ENCODE measurements at regions of chr6 and their contacts with region 1.

Region 1: GRCh38 chr6:134422426-134423231 is 104.7 kb upstream of the SGK1 start:
- DNase-seq: peak; percentile 98
- H3K4me3 ChIP-seq: no peak overlapping the region
- H3K27ac ChIP-seq: peak overlapping the region; percentile 95
- H3K4me1 ChIP-seq: peaks cover 48% of the 10 kb centered on the region
- H3K27me3 ChIP-seq: no peaks in the 10 kb centered on the region
- CTCF ChIP-seq: no peak

Region 2: DNA sequence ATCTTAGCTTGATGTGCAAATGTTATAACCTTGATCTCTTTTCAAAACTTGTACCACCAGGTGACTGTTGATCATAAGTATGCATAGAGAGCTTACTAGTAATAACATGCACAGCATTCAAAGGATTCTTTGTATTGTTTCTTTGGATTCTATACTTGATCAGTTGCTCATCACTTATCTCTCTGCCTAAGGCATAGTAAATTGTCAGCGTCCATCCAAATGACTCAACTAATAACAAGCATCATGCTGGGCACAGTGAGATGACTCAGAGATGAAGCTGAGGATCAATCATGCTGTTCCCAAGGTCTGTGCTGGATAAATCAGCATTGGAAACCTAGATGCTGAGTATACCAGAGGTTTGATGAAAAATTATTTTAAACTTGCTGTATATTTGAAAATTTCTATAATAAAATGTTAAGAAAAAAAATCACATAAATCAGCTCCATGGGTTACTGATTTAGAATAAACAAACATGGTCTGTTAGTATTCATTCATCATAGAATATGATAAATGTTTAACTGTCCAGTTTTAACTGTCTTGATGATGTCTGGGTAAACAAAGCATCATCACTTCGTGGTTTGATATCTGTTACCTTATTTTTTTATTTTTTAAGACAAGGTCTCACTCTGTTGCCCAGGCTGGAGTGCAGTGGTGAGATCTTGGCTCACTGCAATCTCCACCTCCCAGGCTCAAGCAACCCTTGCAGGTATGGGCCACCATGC is 59.1 kb before region 1 on chr6:
- CTCF ChIA-PET with region 1: no interaction called
- dilution Hi-C with region 1: no loop called
- in situ Hi-C with region 1: no loop called
- intact Hi-C with region 1: loop called (anchors 2 kb)
- DNase-seq: peak; percentile 98
- H3K4me3 ChIP-seq: no peak overlapping the region
- H3K27ac ChIP-seq: peak overlapping the region; percentile 88
- H3K4me1 ChIP-seq: peaks cover 24% of the 10 kb centered on the region
- H3K27me3 ChIP-seq: no peaks in the 10 kb centered on the region
- CTCF ChIP-seq: no peak

Region 3: DNA sequence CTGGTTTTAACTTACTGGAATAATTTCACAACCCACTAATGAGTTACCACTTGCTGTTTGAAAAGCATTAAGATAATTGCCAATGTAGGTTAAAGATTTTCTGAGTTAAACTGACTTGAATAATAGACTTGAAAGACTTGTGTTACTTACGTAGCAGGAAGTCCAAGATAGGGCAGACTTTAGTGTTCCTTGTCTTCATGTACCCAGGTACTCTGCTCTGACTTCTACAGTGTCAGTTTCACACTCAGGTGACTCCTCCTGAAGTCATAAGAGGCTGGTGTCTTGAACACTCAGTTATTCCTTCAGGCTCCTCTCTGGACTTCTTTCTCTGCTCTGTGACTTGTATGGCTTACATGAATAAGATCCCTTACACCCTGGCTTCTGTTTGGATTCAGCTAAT is 28.4 kb before region 1 on chr6:
- CTCF ChIA-PET with region 1: no interaction called
- dilution Hi-C with region 1: no loop called
- in situ Hi-C with region 1: no loop called
- intact Hi-C with region 1: loop called (anchors 2 kb)
- DNase-seq: no peak
- H3K4me3 ChIP-seq: no peak overlapping the region
- H3K27ac ChIP-seq: no peak overlapping the region
- H3K4me1 ChIP-seq: peaks cover 11% of the 10 kb centered on the region
- H3K27me3 ChIP-seq: no peaks in the 10 kb centered on the region
- CTCF ChIP-seq: no peak

Region 4: DNA sequence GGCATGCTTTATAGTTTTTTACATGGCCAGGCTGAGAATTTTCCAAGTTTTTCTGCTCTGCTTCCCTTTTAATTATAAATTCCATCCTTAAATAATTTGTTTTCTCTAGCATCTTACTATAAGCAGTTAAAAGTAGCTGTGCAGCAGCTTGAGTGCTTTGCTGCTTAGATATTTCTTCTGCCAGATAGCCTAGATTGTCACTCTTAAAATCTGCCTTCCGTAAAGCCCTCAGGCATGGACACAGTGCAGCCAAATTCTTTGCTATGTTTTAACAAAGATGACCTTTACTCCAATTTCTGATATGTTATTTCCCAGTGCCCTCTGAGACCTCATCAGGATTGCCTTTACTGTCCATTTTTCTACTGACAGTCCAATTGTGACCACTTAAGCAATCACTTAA is 12.1 kb before region 1 on chr6:
- CTCF ChIA-PET with region 1: no interaction called
- dilution Hi-C with region 1: no loop called
- in situ Hi-C with region 1: no loop called
- intact Hi-C with region 1: no loop called
- DNase-seq: no peak
- H3K4me3 ChIP-seq: no peak overlapping the region
- H3K27ac ChIP-seq: no peak overlapping the region
- H3K4me1 ChIP-seq: no peaks in the 10 kb centered on the region
- H3K27me3 ChIP-seq: no peaks in the 10 kb centered on the region
- CTCF ChIP-seq: no peak

Region 5: DNA sequence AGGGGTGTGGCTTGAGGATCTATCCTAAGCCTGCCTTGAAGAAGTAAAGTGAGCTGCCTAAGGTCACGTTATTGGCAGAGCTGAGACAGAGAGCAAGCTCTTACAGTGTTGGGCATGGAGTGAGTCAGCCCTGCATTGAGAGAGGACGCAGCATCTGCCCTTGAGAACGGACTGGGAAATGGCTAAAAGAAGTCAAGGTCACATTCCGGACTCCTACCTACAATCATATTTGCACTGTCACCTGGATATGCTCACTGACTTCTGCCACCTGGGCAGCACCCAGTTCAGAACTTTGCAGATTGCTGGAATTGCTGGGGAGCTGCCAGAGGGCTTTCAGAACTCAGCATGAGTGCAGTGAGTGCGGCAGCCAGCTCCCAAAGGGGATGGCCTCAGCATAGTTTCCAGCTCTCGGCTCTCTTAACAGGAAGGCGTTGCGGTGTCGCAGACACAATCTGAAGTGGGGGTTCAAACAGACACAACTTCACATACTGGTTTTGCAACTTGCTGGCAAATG is 94.6 kb after region 1 on chr6:
- CTCF ChIA-PET with region 1: no interaction called
- dilution Hi-C with region 1: loop called (anchors 5 kb)
- in situ Hi-C with region 1: no loop called
- intact Hi-C with region 1: no loop called
- DNase-seq: peak; percentile 78
- H3K4me3 ChIP-seq: no peak overlapping the region
- H3K27ac ChIP-seq: peak overlapping the region; percentile 18
- H3K4me1 ChIP-seq: peaks cover 35% of the 10 kb centered on the region
- H3K27me3 ChIP-seq: no peaks in the 10 kb centered on the region
- CTCF ChIP-seq: no peak

Region 6: GRCh38 chr6:134589512-134589911 is 166.9 kb after region 1 on chr6:
- CTCF ChIA-PET with region 1: no interaction called
- dilution Hi-C with region 1: no loop called
- in situ Hi-C with region 1: no loop called
- intact Hi-C with region 1: loop called (anchors 2 kb)
- DNase-seq: peak; percentile 96
- H3K4me3 ChIP-seq: no peak overlapping the region
- H3K27ac ChIP-seq: peak overlapping the region; percentile 84
- H3K4me1 ChIP-seq: peaks cover 24% of the 10 kb centered on the region
- H3K27me3 ChIP-seq: no peaks in the 10 kb centered on the region
- CTCF ChIP-seq: no peak